PC-9 (cell line): ENCODE measurements at regions of chr3 and their contacts with region 1.

Region 1: DNA sequence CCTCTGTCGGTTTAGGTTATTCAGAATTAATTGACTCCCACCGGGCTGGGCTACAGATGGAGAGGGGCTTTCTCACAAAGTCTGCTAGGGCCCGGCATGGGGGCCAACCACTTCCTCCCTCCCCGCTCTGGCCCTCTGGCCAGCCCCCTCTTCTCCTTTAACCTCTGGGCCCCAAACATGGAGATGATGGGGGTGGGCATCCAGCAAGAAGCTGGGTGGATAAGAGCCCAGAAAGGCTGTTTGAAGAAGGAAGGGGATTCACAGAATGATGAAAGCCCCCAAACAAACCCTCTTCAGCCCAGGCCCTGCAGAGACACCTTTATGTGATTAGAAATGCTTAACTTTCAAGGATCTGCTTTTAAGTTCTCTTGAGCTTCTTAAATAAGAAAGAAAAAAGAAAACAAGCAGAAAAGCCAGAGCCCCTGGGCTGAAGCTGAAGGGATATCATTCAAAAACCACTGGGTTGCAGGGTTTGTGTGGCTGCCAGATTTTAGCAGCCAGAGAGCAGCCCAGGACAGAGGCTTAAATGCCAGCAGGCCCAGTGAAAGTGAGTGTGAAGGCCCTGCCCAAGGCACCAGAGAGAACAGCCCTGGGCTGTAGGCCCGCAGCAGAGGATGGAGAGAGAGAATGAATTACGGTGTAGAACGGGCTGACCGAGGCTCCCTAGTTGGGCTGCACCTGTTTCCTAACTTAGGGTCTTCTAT is 106.4 kb upstream of the BOC start:
- DNase-seq: no peak
- H3K4me3 ChIP-seq: no peak overlapping the region
- H3K27ac ChIP-seq: no peak overlapping the region
- H3K4me1 ChIP-seq: no peaks in the 10 kb centered on the region
- H3K27me3 ChIP-seq: no peaks in the 10 kb centered on the region
- CTCF ChIP-seq: no peak

Region 2: DNA sequence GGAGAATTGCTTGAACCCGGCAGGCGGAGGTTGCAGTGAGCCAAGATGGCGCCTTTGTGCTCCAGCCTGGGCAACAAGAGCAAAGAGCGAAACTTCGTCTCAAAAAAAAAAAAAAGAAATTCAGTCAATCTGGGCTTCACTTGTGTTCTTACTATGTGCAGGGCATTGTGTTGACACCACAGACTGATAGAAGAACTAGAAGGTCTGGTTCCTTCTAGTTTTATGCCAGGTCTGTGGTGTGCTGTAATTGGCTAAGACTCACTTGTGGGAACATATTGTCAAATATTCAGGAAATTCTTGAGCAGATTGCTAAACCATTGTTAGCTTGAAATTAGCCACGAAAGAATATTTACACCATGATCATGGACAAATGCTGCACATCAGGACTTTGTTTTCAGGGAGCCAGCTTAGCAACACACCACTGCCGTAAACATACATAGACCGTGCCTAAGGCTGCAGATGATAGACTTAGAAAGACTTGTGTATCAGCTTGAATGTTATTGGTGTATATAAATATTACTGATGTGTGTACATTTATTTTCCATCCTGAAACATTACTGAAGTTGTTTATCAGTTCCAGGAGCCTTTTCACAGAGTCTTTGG is 39.6 kb before region 1 on chr3:
- CTCF ChIA-PET with region 1: no interaction called
- POLR2A ChIA-PET with region 1: interaction called, 4 read pairs
- intact Hi-C with region 1: loop called (anchors 5 kb)
- DNase-seq: no peak
- H3K4me3 ChIP-seq: no peak overlapping the region
- H3K27ac ChIP-seq: no peak overlapping the region
- H3K4me1 ChIP-seq: no peaks in the 10 kb centered on the region
- H3K27me3 ChIP-seq: no peaks in the 10 kb centered on the region
- CTCF ChIP-seq: no peak

Region 3: GRCh38 chr3:113878403-113878802 is 773.5 kb after region 1 on chr3:
- CTCF ChIA-PET with region 1: no interaction called
- POLR2A ChIA-PET with region 1: no interaction called
- intact Hi-C with region 1: no loop called
- DNase-seq: no peak
- H3K4me3 ChIP-seq: no peak overlapping the region
- H3K27ac ChIP-seq: no peak overlapping the region
- H3K4me1 ChIP-seq: no peaks in the 10 kb centered on the region
- H3K27me3 ChIP-seq: no peaks in the 10 kb centered on the region
- CTCF ChIP-seq: no peak